HCT116 (cell line): ENCODE measurements at regions of chr22 and their contacts with region 1.

Region 1: GRCh38 chr22:45863981-45864751 is 112.8 kb downstream of the WNT7B start:
- DNase-seq: peak; percentile 33
- ATAC-seq: peak; percentile 88
- H3K4me3 ChIP-seq: no peak overlapping the region
- H3K27ac ChIP-seq: no peak overlapping the region
- H3K4me1 ChIP-seq: peaks cover 0 to 3% of the 10 kb centered on the region in 2 experiments; a peak in 2 of 4 replicates
- H3K27me3 ChIP-seq: no peaks in the 10 kb centered on the region
- CTCF ChIP-seq: peak; percentile 95 to 98 (median 95)
- POLR2A ChIP-seq: no peak
- RAD21 ChIP-seq: peak; percentile 91

Region 2: DNA sequence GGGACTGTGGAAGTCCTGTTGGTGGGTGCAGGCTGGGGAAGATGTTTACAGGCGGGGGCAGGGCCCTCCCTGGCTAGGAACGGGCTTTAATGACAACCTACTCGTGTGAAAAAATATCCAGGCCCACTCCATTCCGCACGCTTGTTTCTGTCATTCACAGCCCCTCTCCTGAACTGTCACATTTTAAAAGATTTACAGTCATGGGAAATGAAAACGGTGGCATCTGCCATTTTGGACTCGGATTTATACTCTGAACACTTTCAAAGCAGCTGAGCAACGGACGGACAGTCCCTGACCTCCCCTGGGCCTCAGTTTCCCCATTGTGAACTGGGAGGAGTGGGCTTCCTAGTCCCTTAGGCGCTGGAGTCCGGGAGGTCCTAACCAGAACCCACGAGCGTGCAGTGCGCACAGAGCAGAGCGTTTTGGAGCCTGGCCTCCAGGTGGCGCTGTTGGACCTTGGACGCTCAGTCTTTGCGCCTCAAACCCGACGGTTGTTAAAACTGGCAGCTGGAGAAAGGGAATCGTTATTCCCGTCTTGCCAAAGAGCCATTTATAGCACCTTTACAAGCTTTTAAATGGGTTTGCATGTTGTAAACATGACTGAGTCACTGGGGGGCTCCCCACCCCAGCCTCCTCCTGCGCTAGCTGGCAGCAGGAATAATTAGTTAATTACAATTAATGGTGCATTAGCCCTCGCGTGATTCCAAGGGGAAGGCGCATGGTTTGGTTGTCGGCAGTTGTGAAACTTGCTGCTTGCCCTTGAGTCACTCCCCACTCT is 286.2 kb before region 1 on chr22:
- CTCF ChIA-PET with region 1: interaction called, 10 read pairs
- POLR2A ChIA-PET with region 1: interaction called, 3 read pairs
- RAD21 ChIA-PET with region 1: interaction called in 1 of 2 experiments, 3 read pairs
- intact Hi-C with region 1: loop called (anchors 10 kb)
- DNase-seq: peak; percentile 68
- ATAC-seq: peak; percentile 94
- H3K4me3 ChIP-seq: no peak overlapping the region
- H3K27ac ChIP-seq: no peak overlapping the region
- H3K4me1 ChIP-seq: peaks cover 0 to 10% of the 10 kb centered on the region in 2 experiments; a peak in 1 of 4 replicates
- H3K27me3 ChIP-seq: no peaks in the 10 kb centered on the region
- CTCF ChIP-seq: peak; percentile 91 to 98 (median 93)
- POLR2A ChIP-seq: no peak
- RAD21 ChIP-seq: peak; percentile 99

Region 3: DNA sequence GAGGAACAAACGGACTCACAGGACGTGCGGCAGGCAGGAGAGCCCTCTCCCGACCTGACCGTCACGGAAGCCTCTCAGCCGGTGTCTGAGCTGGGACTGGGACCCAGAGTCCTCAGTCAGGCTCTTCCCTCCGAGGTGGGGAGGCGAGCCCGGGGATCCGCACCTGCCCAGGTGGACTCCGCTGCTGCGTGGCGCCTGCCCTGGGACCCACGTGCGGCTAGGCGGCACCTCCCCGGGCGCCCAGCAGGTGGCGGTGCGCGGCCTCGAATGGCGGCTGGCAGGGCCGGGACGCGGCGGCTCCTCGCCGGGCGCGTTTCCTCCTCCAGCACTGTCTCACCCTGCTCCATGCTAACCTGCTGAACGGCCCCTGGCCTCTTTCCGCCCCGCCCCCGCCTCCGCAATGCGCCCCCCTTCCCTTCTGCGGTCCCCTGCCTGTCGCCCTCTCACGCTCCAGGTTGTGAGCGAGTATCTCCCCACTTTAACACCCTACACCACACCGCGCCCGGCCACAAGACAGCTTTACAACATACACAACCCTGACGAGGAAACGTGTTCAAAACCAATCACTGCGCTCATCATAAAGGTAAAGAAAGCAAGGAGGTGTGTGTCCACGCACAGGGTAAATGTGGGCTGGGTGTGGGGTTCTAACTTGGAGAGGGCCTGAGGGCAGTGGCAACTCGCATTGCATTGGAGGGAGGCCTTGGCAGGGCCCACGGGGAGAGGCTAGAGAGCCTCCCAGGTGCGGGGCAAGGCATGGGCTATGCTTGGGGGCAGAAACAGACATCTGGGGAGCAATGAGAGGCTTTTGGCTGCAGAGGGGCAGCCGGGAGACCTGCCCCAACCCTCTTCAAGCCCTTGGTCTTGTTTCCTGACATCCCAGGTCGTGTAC is 218.4 kb before region 1 on chr22:
- CTCF ChIA-PET with region 1: interaction called, 5 read pairs
- POLR2A ChIA-PET with region 1: no interaction called
- RAD21 ChIA-PET with region 1: interaction called, 3 to 4 read pairs
- intact Hi-C with region 1: loop called (anchors 10 kb)
- DNase-seq: peak; percentile 26
- ATAC-seq: peak; percentile 94
- H3K4me3 ChIP-seq: peak overlapping the region; percentile 2 to 24; a peak in 3 of 4 replicates
- H3K27ac ChIP-seq: no peak overlapping the region
- H3K4me1 ChIP-seq: peaks cover 0 to 23% of the 10 kb centered on the region in 2 experiments; a peak in 3 of 4 replicates
- H3K27me3 ChIP-seq: no peaks in the 10 kb centered on the region
- CTCF ChIP-seq: peak; percentile 57 to 85 (median 80)
- POLR2A ChIP-seq: no peak
- RAD21 ChIP-seq: peak; percentile 90

Region 4: GRCh38 chr22:45752036-45752435 is 112.1 kb before region 1 on chr22:
- CTCF ChIA-PET with region 1: no interaction called
- POLR2A ChIA-PET with region 1: no interaction called
- RAD21 ChIA-PET with region 1: no interaction called
- intact Hi-C with region 1: no loop called
- DNase-seq: no peak
- ATAC-seq: no peak
- H3K4me3 ChIP-seq: no peak overlapping the region
- H3K27ac ChIP-seq: no peak overlapping the region
- H3K4me1 ChIP-seq: no peaks in the 10 kb centered on the region
- H3K27me3 ChIP-seq: no peaks in the 10 kb centered on the region
- CTCF ChIP-seq: no peak
- POLR2A ChIP-seq: no peak
- RAD21 ChIP-seq: no peak

Region 5: GRCh38 chr22:45968751-45969413 is 104.7 kb after region 1 on chr22:
- CTCF ChIA-PET with region 1: interaction called, 25 read pairs
- POLR2A ChIA-PET with region 1: no interaction called
- RAD21 ChIA-PET with region 1: interaction called, 7 to 10 read pairs
- intact Hi-C with region 1: loop called (anchors 2 kb)
- DNase-seq: peak; percentile 50
- ATAC-seq: peak; percentile 83
- H3K4me3 ChIP-seq: peak overlapping the region; percentile 13 to 27; a peak in 3 of 4 replicates
- H3K27ac ChIP-seq: peak overlapping the region; percentile 60
- H3K4me1 ChIP-seq: peaks cover 18 to 33% of the 10 kb centered on the region in 2 experiments
- H3K27me3 ChIP-seq: no peaks in the 10 kb centered on the region
- CTCF ChIP-seq: no peak
- POLR2A ChIP-seq: no peak
- RAD21 ChIP-seq: no peak